ENCODE measurements at regions of chr13 and their contacts with region 1.

Region 1: DNA sequence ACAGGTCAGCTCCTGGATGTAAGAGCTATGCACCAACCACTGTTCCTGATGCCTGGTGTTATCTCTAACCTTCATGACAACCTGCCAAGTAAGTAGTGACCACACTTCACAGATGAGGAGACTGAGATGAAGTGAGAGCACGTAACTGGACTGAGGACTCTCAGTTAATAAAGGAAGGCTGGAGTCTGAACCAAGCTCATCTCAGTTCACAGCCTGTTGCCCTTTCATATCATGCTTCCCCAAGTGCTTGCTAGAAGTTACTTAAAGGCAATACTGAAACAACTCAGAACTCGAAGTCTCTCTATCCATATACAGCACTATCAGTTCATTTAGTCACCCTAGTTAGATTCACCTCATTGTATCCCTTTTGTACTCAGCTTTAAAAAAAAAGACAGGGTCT is 119.7 kb downstream of the ABCC4 start:
- DNase-seq: no peak
- H3K4me3 Mint-ChIP-seq: no peak overlapping the region
- H3K27ac Mint-ChIP-seq: peak overlapping the region; percentile 38
- H3K4me1 Mint-ChIP-seq: peaks cover 65% of the 10 kb centered on the region
- H3K27me3 Mint-ChIP-seq: no peaks in the 10 kb centered on the region

Region 2: GRCh38 chr13:94435604-94436226 is 745.9 kb before region 1 on chr13:
- CTCF ChIA-PET with region 1: no interaction called
- intact Hi-C with region 1: loop called (anchors 5 kb)
- DNase-seq: no peak
- H3K4me3 Mint-ChIP-seq: no peak overlapping the region
- H3K27ac Mint-ChIP-seq: no peak overlapping the region
- H3K4me1 Mint-ChIP-seq: peaks cover 28% of the 10 kb centered on the region
- H3K27me3 Mint-ChIP-seq: no peaks in the 10 kb centered on the region

Region 3: GRCh38 chr13:94667190-94667589 is 514.4 kb before region 1 on chr13:
- CTCF ChIA-PET with region 1: no interaction called
- intact Hi-C with region 1: loop called (anchors 1 kb)
- DNase-seq: peak; percentile 32
- H3K4me3 Mint-ChIP-seq: no peak overlapping the region
- H3K27ac Mint-ChIP-seq: peak overlapping the region; percentile 82
- H3K4me1 Mint-ChIP-seq: peaks cover 35% of the 10 kb centered on the region
- H3K27me3 Mint-ChIP-seq: peaks cover 9% of the 10 kb centered on the region

Region 4: GRCh38 chr13:95050800-95051615 is 130.6 kb before region 1 on chr13:
- CTCF ChIA-PET with region 1: no interaction called
- intact Hi-C with region 1: loop called (anchors 1 kb)
- DNase-seq: peak; percentile 16
- H3K4me3 Mint-ChIP-seq: no peak overlapping the region
- H3K27ac Mint-ChIP-seq: no peak overlapping the region
- H3K4me1 Mint-ChIP-seq: peaks cover 20% of the 10 kb centered on the region
- H3K27me3 Mint-ChIP-seq: no peaks in the 10 kb centered on the region

Region 5: GRCh38 chr13:95289020-95289444 is 107.4 kb after region 1 on chr13:
- CTCF ChIA-PET with region 1: interaction called, 6 read pairs
- intact Hi-C with region 1: loop called (anchors 5 kb)
- DNase-seq: no peak
- H3K4me3 Mint-ChIP-seq: no peak overlapping the region
- H3K27ac Mint-ChIP-seq: no peak overlapping the region
- H3K4me1 Mint-ChIP-seq: no peaks in the 10 kb centered on the region
- H3K27me3 Mint-ChIP-seq: no peaks in the 10 kb centered on the region

Region 6: DNA sequence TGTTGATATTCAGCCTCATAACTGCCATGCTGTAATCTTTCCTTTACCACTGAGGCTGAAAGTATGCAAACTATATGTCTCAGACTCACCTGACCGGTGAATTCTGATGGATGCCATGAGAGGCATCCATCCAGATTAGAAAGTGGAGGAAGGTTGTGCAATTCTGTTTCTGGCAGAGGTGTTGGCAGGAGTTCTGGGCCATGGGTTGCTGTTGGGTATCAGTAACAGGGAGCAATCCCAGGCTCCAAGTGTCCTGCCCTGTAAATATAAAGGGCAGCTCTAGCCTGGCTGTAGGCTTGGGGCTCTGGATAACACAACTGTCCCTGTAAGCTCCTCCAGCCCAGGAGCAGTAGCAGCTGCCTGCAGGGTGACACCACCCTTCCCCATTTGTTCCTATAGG is 197.0 kb after region 1 on chr13:
- CTCF ChIA-PET with region 1: interaction called, 146 read pairs
- intact Hi-C with region 1: no loop called
- DNase-seq: no peak
- H3K4me3 Mint-ChIP-seq: no peak overlapping the region
- H3K27ac Mint-ChIP-seq: no peak overlapping the region
- H3K4me1 Mint-ChIP-seq: peaks cover 5% of the 10 kb centered on the region
- H3K27me3 Mint-ChIP-seq: no peaks in the 10 kb centered on the region